ENCODE measurements at regions of chr20 and their contacts with region 1.

Region 1: GRCh38 chr20:62793912-62794724 is 2.2 kb upstream of the MRGBP start:
- DNase-seq: peak; percentile 98
- H3K4me3 Mint-ChIP-seq: peak overlapping the region; percentile 79
- H3K27ac Mint-ChIP-seq: peak overlapping the region; percentile 81
- H3K4me1 Mint-ChIP-seq: peaks cover 29% of the 10 kb centered on the region
- H3K27me3 Mint-ChIP-seq: no peaks in the 10 kb centered on the region

Region 2: DNA sequence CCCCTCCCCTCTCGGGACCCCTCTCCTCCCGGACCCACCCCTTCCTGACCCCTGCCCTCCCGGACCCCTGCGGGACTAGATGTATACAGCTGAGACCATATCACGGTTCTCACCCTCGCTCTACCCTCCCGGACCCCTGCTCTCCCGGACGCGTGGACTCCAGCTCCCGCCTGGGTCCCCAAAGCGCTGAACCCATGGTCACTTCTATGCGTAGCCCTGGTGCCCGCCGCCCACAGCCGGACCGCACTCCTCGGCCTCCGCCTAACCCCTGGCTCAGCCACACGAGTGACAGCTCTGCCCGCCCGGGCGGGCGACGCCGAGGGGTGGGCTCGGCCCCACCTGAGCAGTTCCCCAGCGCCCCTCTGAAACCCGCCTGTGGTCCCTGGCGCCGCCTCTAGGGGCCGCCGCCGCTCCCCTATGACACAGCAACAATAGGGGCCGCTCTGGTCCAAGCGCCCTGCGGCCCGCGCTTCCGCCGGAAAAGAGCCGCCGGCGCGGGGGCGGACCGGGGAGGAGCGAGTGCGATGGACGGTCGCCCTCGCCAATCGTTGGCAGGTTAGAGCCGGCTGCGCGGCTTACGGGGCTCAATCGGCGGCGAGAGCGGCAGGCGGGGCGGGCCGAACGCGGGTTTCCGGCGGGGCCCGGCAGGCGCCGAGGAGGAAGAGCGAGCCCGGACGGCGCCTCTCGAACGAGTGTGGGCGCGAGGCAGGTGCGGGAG is 491.6 kb before region 1 on chr20 and contains the start of gene ADRM1:
- CTCF ChIA-PET with region 1: no interaction called
- POLR2A ChIA-PET with region 1: no interaction called
- intact Hi-C with region 1: loop called (anchors 2 kb)
- DNase-seq: peak; percentile 97
- H3K4me3 Mint-ChIP-seq: peak within 1 kb of the TSS; percentile 91
- H3K27ac Mint-ChIP-seq: peak within 1 kb of the TSS; percentile 97
- H3K4me1 Mint-ChIP-seq: peaks cover 29% of the 10 kb centered on the region
- H3K27me3 Mint-ChIP-seq: no peaks in the 10 kb centered on the region
- total RNA-seq, gene ADRM1: 98.6 to 101 TPM

Region 3: GRCh38 chr20:62623488-62624324 is 170.4 kb before region 1 on chr20:
- CTCF ChIA-PET with region 1: interaction called, 7 read pairs
- POLR2A ChIA-PET with region 1: no interaction called
- intact Hi-C with region 1: loop called (anchors 2 kb)
- DNase-seq: peak; percentile 94
- H3K4me3 Mint-ChIP-seq: peak overlapping the region; percentile 61
- H3K27ac Mint-ChIP-seq: peak overlapping the region; percentile 92
- H3K4me1 Mint-ChIP-seq: peaks cover 21% of the 10 kb centered on the region
- H3K27me3 Mint-ChIP-seq: no peaks in the 10 kb centered on the region

Region 4: DNA sequence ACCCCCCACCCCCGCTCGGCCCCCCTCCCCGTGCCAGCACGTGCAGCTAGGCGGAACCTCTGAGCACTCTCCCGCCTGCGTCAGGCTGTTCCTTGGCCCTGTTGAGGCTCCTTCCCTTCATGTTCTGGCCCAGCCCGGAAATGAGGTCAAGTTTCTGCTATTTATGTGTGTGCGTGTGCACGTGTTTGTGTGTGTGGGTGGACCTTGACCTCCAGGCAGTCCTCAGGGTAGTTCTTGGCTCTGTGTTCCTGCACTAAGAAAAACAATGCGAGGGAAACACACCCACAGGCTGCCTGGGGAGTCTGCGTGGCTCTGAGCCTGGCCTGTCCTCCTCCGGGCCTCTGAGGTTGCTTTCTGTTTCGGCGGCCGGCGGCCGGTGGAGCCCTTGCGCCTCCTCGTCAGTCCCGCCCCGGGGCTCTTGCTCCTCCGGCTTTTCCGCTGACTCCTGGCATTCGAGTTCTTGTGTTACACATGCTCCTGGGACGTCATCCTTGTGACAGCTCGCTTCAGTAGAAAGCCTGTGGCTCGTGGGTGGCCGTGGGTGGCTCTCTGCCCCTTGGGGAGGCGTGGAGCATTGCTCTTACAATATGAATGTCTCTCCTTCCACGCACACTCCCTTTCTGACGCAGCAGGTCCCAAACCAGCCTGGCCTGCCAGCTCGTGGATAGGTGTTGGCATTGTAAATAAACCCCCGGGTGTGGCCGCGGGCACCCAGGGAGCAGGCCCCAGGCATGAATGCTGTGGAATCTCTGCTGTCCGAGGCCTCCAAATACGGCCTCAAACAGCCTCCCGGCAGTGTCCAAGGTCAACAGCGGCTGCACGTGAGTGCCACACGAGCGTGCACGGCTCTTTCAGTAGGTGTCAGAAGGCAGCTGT is 141.8 kb before region 1 on chr20:
- CTCF ChIA-PET with region 1: interaction called, 9 read pairs
- POLR2A ChIA-PET with region 1: interaction called, 3 read pairs
- intact Hi-C with region 1: loop called (anchors 1 kb)
- DNase-seq: peak; percentile 80
- H3K4me3 Mint-ChIP-seq: peak overlapping the region; percentile 63
- H3K27ac Mint-ChIP-seq: peak overlapping the region; percentile 84
- H3K4me1 Mint-ChIP-seq: peaks cover 29% of the 10 kb centered on the region
- H3K27me3 Mint-ChIP-seq: no peaks in the 10 kb centered on the region

Region 5: DNA sequence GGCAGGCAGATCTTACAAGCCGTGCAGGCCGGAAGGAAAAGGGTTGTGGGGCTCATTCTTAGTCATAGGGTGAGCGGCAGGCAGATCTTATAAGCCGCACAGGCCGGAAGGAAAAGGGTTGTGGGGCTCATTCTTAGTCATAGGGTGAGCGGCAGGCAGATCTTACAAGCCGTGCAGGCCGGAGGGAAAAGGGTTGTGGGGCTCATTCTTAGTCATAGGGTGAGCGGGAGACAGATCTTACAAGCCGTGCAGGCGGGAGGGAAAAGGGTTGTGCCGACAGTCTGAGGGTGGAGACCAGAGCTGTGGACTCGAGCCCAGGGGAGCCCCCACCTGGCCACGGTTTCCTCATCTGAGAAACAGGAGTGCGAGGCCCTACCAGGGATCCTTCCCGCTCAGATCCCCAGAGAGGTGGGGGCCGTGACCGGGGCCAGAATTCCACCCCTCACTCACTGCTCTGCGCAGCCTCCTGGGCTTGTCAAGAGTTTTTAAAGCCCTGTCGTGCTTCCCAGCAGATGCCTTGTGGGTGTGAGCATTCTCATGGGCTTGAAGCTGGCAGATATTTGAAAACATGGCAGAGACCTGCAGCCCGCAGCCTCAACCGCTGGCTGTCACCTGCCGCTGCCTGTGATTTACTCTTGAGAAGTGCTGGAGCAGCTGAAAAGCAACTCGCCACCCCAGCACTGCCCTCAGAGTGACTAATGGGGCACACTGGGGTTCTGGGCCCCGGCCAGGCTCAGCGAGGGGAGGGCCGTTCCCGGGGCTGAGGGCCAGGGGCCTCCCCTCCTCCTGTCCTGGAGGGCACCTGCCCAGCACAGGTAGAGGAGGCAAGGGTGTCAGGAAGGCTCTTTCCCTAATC is 53.6 kb before region 1 on chr20:
- CTCF ChIA-PET with region 1: interaction called, 6 read pairs
- POLR2A ChIA-PET with region 1: interaction called, 4 read pairs
- intact Hi-C with region 1: loop called (anchors 1 kb)
- DNase-seq: peak; percentile 95
- H3K4me3 Mint-ChIP-seq: peak overlapping the region; percentile 48
- H3K27ac Mint-ChIP-seq: peak overlapping the region; percentile 82
- H3K4me1 Mint-ChIP-seq: peaks cover 44% of the 10 kb centered on the region
- H3K27me3 Mint-ChIP-seq: no peaks in the 10 kb centered on the region

Region 6: GRCh38 chr20:62808211-62808865 is 14.2 kb after region 1 on chr20:
- CTCF ChIA-PET with region 1: interaction called, 11 read pairs
- POLR2A ChIA-PET with region 1: interaction called, 4 read pairs
- intact Hi-C with region 1: loop called (anchors 1 kb)
- DNase-seq: peak; percentile 80
- H3K4me3 Mint-ChIP-seq: no peak overlapping the region
- H3K27ac Mint-ChIP-seq: no peak overlapping the region
- H3K4me1 Mint-ChIP-seq: peaks cover 24% of the 10 kb centered on the region
- H3K27me3 Mint-ChIP-seq: no peaks in the 10 kb centered on the region

Region 7: DNA sequence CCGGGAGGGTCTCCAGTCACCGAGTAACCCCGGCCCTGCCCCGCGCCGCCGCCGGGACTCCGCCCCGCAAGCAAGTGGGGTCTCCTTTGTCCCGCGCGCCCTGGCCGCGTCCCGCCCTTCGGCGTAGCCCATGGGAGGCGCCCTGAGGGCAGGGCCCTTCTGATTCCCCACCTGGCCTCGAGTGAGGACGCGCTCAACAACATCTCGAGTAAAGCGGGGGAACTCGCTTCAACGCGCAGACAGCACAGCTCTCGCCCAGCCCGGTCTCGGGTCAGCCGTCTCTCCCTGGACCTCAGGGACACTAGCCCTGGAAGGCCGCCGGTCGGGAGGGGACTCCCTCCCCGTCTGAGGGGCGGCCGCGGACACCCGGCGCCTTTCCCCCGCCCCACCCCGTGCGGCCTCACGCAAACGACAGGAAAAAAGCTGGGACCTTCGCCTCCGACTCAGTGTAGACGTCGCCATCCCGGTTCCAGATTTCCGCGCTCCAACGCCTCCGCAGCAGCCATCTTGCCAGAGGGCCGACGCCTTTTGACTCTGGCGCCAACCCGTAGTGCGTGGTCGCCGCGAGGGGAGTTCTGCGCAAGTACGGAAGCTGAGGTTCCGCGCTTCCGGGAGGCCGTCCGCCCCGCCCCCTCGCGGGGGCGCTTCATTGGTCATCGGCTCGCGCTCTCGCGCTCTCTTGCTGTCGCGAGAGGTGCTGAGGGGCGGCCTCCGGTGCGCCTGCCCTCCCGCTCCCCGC is 143.4 kb after region 1 on chr20:
- CTCF ChIA-PET with region 1: no interaction called
- POLR2A ChIA-PET with region 1: no interaction called
- intact Hi-C with region 1: loop called (anchors 5 kb)
- DNase-seq: peak; percentile 98
- H3K4me3 Mint-ChIP-seq: no peak overlapping the region
- H3K27ac Mint-ChIP-seq: peak overlapping the region; percentile 96
- H3K4me1 Mint-ChIP-seq: peaks cover 37% of the 10 kb centered on the region
- H3K27me3 Mint-ChIP-seq: no peaks in the 10 kb centered on the region

Measured in activated CD4-positive, alpha-beta memory T cell treated with anti-CD3 and anti-CD28 coated beads for 36 hours (primary cell).